Endothelial cell of umbilical vein (primary cell): ENCODE measurements at regions of chr10 and their contacts with region 1.

Region 1: DNA sequence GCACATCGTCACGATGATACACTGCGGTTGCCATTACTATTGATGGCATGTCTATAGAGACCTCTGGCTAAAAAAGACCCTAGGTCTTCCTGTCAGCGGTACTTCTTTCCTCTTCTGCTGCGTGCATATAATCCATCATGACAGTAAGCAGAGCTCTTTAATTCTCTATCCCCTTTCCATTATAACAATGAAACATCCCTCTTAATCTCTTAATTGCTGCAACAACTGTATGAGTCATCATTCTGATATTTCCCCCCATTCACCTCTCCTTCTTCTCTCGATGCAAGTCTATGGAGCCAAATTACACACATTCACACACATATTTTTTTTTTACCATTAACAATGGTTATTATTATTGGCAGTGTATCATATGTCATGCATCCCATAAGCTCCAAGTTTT is 45.2 kb upstream of the AKR1E2 start:
- DNase-seq: peak; percentile 94
- H3K4me3 ChIP-seq: peak overlapping the region in 1 of 3 experiments; percentile 64
- H3K27ac ChIP-seq: peak overlapping the region; percentile 75
- H3K4me1 ChIP-seq: peaks cover 47% of the 10 kb centered on the region
- H3K27me3 ChIP-seq: no peaks in the 10 kb centered on the region
- CTCF ChIP-seq: no peak
- POLR2A ChIP-seq: peak; percentile 61

Region 2: DNA sequence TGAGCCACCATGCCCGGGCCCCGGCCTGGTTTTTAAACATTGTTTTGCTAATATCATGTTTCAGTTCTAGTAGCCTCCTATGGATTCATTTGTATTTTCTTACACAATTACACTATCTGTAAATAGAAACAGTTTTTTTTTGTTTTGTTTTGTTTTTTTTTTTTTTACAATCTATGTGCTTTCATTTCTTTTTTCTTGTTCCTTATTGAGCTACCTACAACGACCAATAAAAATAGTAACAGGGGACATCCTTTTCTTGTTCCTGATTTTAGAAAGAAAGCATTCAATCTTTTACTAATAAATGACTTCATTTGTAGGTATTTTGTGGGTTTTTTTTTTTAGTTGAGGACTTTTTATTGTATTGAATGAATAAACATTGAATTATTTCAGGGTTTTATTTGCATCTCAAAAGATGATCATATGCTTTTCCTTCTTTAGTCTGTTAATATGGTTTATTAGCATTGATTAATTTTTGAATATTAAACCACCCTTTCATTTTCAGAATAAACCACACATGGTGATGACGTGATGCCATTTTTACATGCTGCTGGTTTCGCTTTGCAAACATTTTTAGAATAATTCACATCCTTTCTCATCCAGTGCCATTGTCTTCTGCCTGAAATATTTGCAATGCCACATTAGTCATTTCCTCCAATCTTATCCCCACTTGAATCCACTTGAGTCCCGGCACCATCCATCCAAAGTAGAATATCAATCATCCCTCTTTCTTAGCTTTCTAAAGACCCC is 27.2 kb after region 1 on chr10:
- CTCF ChIA-PET with region 1: interaction called, 4 read pairs
- POLR2A ChIA-PET with region 1: interaction called, 4 read pairs
- dilution Hi-C with region 1: no loop called
- intact Hi-C with region 1: loop called (anchors 1 kb)
- DNase-seq: peak; percentile 93
- H3K4me3 ChIP-seq: no peak overlapping the region
- H3K27ac ChIP-seq: peak overlapping the region; percentile 95
- H3K4me1 ChIP-seq: peaks cover 53% of the 10 kb centered on the region
- H3K27me3 ChIP-seq: no peaks in the 10 kb centered on the region
- CTCF ChIP-seq: no peak
- POLR2A ChIP-seq: peak; percentile 47

Region 3: DNA sequence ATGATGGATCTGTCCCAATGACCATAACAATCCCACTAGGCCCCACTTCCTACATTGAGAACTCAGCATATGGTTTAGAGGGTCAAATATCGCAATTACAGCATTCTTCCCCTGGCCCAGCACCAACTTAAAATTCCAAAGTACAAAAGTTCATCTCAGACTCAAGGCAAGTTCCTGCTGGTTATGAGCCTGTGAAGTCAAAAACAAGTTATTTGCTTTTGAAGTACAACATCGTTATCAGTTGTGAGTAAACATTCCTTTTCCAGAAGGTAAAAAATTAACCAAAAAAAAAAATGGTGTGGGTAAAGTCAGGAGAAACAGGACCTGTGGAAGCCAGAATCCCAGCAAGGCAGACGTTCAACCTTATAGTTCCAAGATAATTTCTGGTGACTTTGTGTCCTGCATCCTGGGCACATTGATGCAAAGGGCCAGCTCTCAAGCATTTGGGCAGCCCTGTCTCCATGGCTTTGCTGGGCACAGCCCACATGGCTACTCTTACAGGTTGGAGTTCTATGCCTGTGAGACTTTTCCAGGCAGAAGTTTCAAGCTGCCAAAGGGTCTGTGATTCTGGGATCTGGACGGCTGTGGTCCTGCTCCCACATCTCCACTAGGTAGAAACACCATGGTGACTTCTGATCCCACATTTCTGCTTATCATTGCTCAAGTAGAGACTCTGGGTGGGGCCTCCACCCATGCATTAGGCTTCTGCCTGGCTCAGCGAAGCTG is 366.6 kb after region 1 on chr10:
- CTCF ChIA-PET with region 1: no interaction called
- POLR2A ChIA-PET with region 1: no interaction called
- dilution Hi-C with region 1: no loop called
- intact Hi-C with region 1: no loop called
- DNase-seq: no peak
- H3K4me3 ChIP-seq: no peak overlapping the region
- H3K27ac ChIP-seq: no peak overlapping the region
- H3K4me1 ChIP-seq: no peaks in the 10 kb centered on the region
- H3K27me3 ChIP-seq: no peaks in the 10 kb centered on the region
- CTCF ChIP-seq: no peak
- POLR2A ChIP-seq: no peak